ENCODE measurements at regions of chr2 and their contacts with region 1.

Region 1: GRCh38 chr2:221573430-221574230 is 1.5 kb upstream of the EPHA4 start:
- DNase-seq: peak; percentile 80
- H3K4me3 Mint-ChIP-seq: peak overlapping the region; percentile 96
- H3K27ac Mint-ChIP-seq: peak overlapping the region; percentile 41
- H3K4me1 Mint-ChIP-seq: peaks cover 10% of the 10 kb centered on the region
- H3K27me3 Mint-ChIP-seq: no peaks in the 10 kb centered on the region
- CTCF ChIP-seq: peak; percentile 94

Region 2: DNA sequence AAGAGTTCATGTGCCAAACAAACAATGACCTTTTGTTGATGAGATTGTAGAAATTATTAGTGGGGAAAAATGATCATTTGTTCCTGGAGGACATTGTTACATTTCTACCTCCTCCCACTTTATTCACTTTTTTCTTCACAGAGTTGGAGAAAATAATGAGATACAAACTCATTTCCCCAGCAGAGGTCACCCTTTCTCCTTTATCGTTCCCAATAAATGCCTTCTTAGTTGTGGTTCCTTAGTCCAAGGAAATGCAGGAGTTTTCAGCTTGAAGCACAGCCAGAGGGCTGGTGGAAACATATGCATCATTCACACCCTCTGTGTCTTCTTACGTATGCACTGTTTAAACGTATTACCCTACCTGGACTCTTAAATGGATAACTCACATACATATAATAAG is 1837.4 kb before region 1 on chr2:
- CTCF ChIA-PET with region 1: interaction called, 37 read pairs
- POLR2A ChIA-PET with region 1: interaction called, 8 read pairs
- intact Hi-C with region 1: loop called (anchors 1 kb)
- DNase-seq: peak; percentile 76
- H3K4me3 Mint-ChIP-seq: no peak overlapping the region
- H3K27ac Mint-ChIP-seq: no peak overlapping the region
- H3K4me1 Mint-ChIP-seq: peaks cover 15% of the 10 kb centered on the region
- H3K27me3 Mint-ChIP-seq: no peaks in the 10 kb centered on the region
- CTCF ChIP-seq: peak; percentile 42

Region 3: DNA sequence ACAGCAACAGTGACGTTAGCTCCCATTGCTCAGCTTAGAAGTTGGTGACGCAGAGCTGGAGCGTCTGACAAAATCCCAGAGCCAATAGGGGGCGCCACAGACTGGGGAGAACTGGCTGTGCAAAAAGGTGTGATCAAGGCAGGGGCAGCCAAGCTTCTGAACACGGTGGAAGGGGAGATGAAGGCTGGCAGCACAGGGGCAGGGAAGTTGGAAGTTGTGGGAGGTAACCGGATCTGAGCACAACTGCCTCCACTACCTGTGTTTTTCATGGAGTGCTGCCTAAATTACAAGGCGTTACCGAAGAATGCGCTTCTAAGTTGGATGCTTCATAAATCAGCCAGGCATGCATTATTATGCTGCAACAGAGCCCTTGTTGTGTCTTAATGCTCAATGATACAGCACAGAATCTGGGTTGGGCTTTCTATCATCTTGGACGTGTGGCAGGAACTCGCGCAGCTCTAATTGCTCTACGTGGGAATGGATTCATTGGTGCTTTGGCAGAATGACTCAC is 1576.2 kb before region 1 on chr2:
- CTCF ChIA-PET with region 1: no interaction called
- POLR2A ChIA-PET with region 1: no interaction called
- intact Hi-C with region 1: loop called (anchors 1 kb)
- DNase-seq: peak; percentile 45
- H3K4me3 Mint-ChIP-seq: no peak overlapping the region
- H3K27ac Mint-ChIP-seq: no peak overlapping the region
- H3K4me1 Mint-ChIP-seq: peaks cover 20% of the 10 kb centered on the region
- H3K27me3 Mint-ChIP-seq: no peaks in the 10 kb centered on the region
- CTCF ChIP-seq: peak; percentile 58

Region 4: DNA sequence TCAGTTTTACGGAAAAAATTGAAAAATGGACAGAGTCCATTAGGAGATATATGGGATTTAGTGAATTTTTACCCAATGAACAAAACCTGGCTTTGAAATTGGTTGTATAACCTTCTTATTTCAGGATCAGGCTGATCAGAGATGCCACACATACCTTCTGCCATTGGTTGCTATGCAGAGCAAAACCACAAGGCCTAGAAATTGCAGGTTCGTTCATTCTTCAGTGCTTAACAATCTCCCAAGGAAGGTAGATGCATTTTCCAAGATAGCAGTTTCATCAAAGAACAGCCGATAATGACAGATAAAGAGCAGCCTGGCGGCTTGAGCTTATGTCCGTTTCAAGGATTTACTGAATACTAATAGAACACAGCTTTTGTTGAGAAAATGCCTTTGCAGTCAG is 870.4 kb before region 1 on chr2:
- CTCF ChIA-PET with region 1: no interaction called
- POLR2A ChIA-PET with region 1: no interaction called
- intact Hi-C with region 1: loop called (anchors 5 kb)
- DNase-seq: no peak
- H3K4me3 Mint-ChIP-seq: no peak overlapping the region
- H3K27ac Mint-ChIP-seq: no peak overlapping the region
- H3K4me1 Mint-ChIP-seq: no peaks in the 10 kb centered on the region
- H3K27me3 Mint-ChIP-seq: no peaks in the 10 kb centered on the region
- CTCF ChIP-seq: no peak

Region 5: GRCh38 chr2:220891405-220891804 is 682.2 kb before region 1 on chr2:
- CTCF ChIA-PET with region 1: no interaction called
- POLR2A ChIA-PET with region 1: no interaction called
- intact Hi-C with region 1: loop called (anchors 10 kb)
- DNase-seq: peak; percentile 67
- H3K4me3 Mint-ChIP-seq: no peak overlapping the region
- H3K27ac Mint-ChIP-seq: no peak overlapping the region
- H3K4me1 Mint-ChIP-seq: peaks cover 6% of the 10 kb centered on the region
- H3K27me3 Mint-ChIP-seq: no peaks in the 10 kb centered on the region
- CTCF ChIP-seq: no peak

Region 6: DNA sequence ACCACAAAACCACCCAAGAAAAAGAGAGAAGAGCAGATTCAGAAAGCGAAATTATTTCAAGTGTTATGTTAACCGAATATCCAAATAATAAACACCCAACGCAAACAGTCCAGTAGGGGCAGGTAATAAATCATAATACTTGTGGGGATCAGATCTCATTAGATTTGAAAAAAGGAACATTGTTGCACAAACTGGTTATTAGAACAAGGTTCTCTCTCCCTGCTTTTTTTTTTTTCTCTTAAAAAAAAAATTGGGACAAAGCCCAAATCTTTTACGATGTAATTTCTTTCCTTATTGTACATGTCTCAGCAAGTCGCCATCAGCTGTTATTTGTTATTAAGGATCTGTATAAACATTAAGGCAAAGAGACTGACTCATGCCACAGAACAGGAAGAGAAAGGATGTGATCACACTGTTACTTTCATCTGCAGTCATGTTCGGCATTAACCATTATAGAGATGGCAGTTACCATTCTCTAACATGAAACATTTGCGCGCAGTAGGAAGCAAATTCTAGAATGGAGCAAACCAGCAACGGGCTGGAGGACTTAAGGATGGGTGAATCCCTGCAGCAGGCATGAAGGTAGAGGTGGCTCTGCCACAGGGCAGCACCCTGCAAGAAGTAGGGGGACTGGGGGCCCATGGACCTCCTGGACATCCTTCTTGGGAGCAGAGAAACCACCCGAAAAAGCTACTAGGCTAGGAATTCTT is 43.5 kb before region 1 on chr2:
- CTCF ChIA-PET with region 1: no interaction called
- POLR2A ChIA-PET with region 1: interaction called, 3 read pairs
- intact Hi-C with region 1: loop called (anchors 1 kb)
- DNase-seq: peak; percentile 88
- H3K4me3 Mint-ChIP-seq: peak overlapping the region; percentile 52
- H3K27ac Mint-ChIP-seq: peak overlapping the region; percentile 63
- H3K4me1 Mint-ChIP-seq: peaks cover 30% of the 10 kb centered on the region
- H3K27me3 Mint-ChIP-seq: no peaks in the 10 kb centered on the region
- CTCF ChIP-seq: no peak

Region 7: GRCh38 chr2:221876016-221876415 is 302.4 kb after region 1 on chr2:
- CTCF ChIA-PET with region 1: no interaction called
- POLR2A ChIA-PET with region 1: no interaction called
- intact Hi-C with region 1: no loop called
- DNase-seq: peak; percentile 6
- H3K4me3 Mint-ChIP-seq: no peak overlapping the region
- H3K27ac Mint-ChIP-seq: no peak overlapping the region
- H3K4me1 Mint-ChIP-seq: no peaks in the 10 kb centered on the region
- H3K27me3 Mint-ChIP-seq: no peaks in the 10 kb centered on the region
- CTCF ChIP-seq: no peak

Region 8: DNA sequence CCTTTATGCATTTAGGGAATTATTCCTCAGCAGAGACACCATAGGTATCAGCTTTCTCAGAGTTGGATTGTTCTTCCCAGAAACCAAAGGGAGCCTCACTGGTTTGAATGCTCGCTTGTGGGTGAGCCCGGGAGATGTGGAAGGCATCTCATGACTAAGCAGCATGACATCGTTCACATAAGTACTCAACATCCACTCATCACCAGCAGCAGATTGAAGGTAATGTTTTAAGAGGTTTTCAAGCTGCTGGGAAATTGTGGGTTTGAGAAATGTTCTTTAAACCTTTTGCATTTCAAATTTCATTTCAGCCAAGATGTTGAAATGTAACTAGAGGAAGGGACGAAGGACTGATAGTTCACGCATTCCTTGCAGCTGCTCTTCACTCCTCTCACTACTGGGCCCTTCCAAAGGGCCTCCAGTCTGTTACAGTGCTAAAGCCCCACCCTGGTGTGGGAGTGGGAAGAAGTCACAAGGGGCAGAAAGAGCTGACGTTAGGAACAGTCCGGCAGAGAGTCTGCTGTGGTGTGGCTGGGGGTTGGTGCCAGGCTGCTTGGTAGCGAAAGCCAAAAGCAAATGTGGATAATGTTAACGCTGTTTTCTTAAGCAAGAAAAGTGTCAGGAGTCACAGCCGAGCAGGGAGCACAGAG is 323.0 kb after region 1 on chr2:
- CTCF ChIA-PET with region 1: no interaction called
- POLR2A ChIA-PET with region 1: no interaction called
- intact Hi-C with region 1: no loop called
- DNase-seq: no peak
- H3K4me3 Mint-ChIP-seq: no peak overlapping the region
- H3K27ac Mint-ChIP-seq: no peak overlapping the region
- H3K4me1 Mint-ChIP-seq: no peaks in the 10 kb centered on the region
- H3K27me3 Mint-ChIP-seq: no peaks in the 10 kb centered on the region
- CTCF ChIP-seq: no peak

Measured in MCF 10A (cell line).